Activated CD8-positive, alpha-beta T cell treated with anti-CD3 and anti-CD28 coated beads for 36 hours (primary cell): ENCODE measurements at regions of chr20 and their contacts with region 1.

Region 1: GRCh38 chr20:34089655-34090345 is 22.2 kb downstream of the EIF2S2 start:
- DNase-seq: no peak
- ATAC-seq: no peak
- H3K4me3 Mint-ChIP-seq: no peak overlapping the region
- H3K27ac Mint-ChIP-seq: no peak overlapping the region
- H3K4me1 Mint-ChIP-seq: peaks cover 21% of the 10 kb centered on the region
- H3K27me3 Mint-ChIP-seq: no peaks in the 10 kb centered on the region
- CTCF ChIP-seq: no peak

Region 2: GRCh38 chr20:34102342-34102741 is 12.5 kb after region 1 on chr20:
- CTCF ChIA-PET with region 1: interaction called, 5 read pairs
- POLR2A ChIA-PET with region 1: interaction called, 22 read pairs
- intact Hi-C with region 1: no loop called
- DNase-seq: no peak
- ATAC-seq: no peak
- H3K4me3 Mint-ChIP-seq: no peak overlapping the region
- H3K27ac Mint-ChIP-seq: peak overlapping the region; percentile 48
- H3K4me1 Mint-ChIP-seq: peaks cover 53% of the 10 kb centered on the region
- H3K27me3 Mint-ChIP-seq: no peaks in the 10 kb centered on the region
- CTCF ChIP-seq: no peak